Transverse colon (tissue), 4 donors: ENCODE measurements at regions of chr1 and their contacts with region 1.

Region 1: DNA sequence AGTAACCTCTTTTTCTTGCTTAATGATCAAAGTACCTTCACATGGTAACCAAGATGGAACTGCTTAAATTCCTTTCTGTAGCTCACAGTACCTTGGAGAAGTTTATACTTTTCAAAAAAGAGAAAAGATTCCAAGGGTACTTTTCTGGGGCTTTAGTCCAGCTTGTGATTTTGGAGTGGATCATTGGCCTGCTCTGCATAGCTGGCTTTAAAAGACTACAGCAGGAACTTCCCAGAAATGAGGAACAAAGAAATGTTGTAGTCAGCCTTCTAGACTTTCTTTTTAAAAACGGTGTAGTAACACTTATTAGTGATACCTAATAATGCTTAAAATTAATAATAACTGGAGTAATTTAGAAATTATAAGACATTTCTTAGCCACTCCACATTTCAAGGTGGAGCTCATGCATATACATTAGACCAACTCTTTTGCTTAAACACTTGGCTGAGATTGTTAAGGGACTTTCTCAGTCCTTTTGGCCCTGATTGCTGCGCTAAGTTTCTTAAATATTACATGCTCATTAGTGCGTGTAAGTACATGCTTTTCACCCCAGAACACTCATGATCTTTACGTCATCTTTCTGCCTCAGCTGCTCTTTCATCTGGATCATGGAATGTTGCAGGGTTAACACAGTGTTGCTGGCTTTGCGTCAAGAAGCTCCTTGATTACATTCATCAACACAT is 57.3 kb downstream of the SDCCAG8 start:
- DNase-seq: no peak
- H3K4me3 ChIP-seq: no peak overlapping the region
- H3K27ac ChIP-seq: peak overlapping the region in 1 of 4 donors; percentile 13
- H3K4me1 ChIP-seq: no peaks in the 10 kb centered on the region
- H3K27me3 ChIP-seq: no peaks in the 10 kb centered on the region
- CTCF ChIP-seq: no peak
- EP300 ChIP-seq: no peak
- POLR2A ChIP-seq: no peak

Region 2: DNA sequence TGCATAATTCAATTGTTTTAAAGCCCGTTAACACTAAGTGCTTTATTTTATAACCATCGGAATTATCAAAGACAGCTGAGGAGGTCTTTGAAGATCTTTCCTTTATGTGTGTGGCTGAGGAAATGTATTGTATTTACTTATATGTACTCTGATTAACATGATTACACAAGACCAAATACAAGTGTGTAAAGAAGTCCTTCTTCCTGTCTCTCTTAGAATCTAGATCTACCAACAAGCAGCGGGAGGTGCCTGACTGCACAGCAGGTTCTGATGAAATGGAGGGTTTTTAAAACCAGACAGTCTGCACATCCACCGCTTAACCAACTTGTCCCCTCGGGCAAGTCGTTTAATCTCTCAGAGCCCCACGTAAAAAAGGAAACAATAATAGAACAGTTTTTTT is 1073.7 kb before region 1 on chr1:
- in situ Hi-C with region 1: no loop called
- intact Hi-C with region 1: loop called (anchors 5 kb)
- DNase-seq: no peak
- H3K4me3 ChIP-seq: no peak overlapping the region
- H3K27ac ChIP-seq: no peak overlapping the region
- H3K4me1 ChIP-seq: no peaks in the 10 kb centered on the region
- H3K27me3 ChIP-seq: no peaks in the 10 kb centered on the region
- CTCF ChIP-seq: no peak
- EP300 ChIP-seq: no peak
- POLR2A ChIP-seq: no peak

Region 3: GRCh38 chr1:242467556-242468145 is 845.4 kb before region 1 on chr1:
- in situ Hi-C with region 1: loop called in 3 of 4 experiments (anchors 25 kb)
- intact Hi-C with region 1: no loop called
- DNase-seq: peak; percentile 41
- H3K4me3 ChIP-seq: no peak overlapping the region
- H3K27ac ChIP-seq: no peak overlapping the region
- H3K4me1 ChIP-seq: no peaks in the 10 kb centered on the region
- H3K27me3 ChIP-seq: no peaks in the 10 kb centered on the region
- CTCF ChIP-seq: peak; percentile 41 to 57 (median 48)
- EP300 ChIP-seq: no peak
- POLR2A ChIP-seq: no peak

Region 4: GRCh38 chr1:243264717-243265116 is 48.4 kb before region 1 on chr1:
- in situ Hi-C with region 1: no loop called
- intact Hi-C with region 1: no loop called
- DNase-seq: no peak
- H3K4me3 ChIP-seq: no peak overlapping the region
- H3K27ac ChIP-seq: peak overlapping the region in 3 of 4 donors; percentile 12 to 33 (median 16)
- H3K4me1 ChIP-seq: peaks cover 0 to 12% (median 0%) of the 10 kb centered on the region in 4 donors
- H3K27me3 ChIP-seq: no peaks in the 10 kb centered on the region
- CTCF ChIP-seq: no peak
- EP300 ChIP-seq: no peak
- POLR2A ChIP-seq: no peak